Cardiac septum (tissue), 1 donor: ENCODE measurements at regions of chr12 and their contacts with region 1.

Region 1: GRCh38 chr12:120649442-120650232 is 9.2 kb downstream of the CABP1 start:
- DNase-seq: no peak

Region 2: GRCh38 chr12:120686690-120687577 is 37.3 kb after region 1 on chr12 and contains the start of gene MLEC:
- intact Hi-C with region 1: loop called (anchors 2 kb)
- DNase-seq: peak; percentile 99
- total RNA-seq, gene MLEC: 103 TPM

Region 3: GRCh38 chr12:120713861-120714482 is 64.3 kb after region 1 on chr12:
- intact Hi-C with region 1: loop called (anchors 1 kb)
- DNase-seq: no peak

Region 4: GRCh38 chr12:120971299-120972179 is 321.9 kb after region 1 on chr12:
- intact Hi-C with region 1: loop called (anchors 5 kb)
- DNase-seq: no peak